Esophagus muscularis mucosa (tissue), 4 donors: ENCODE measurements at regions of chr10 and their contacts with region 1.

Region 1: DNA sequence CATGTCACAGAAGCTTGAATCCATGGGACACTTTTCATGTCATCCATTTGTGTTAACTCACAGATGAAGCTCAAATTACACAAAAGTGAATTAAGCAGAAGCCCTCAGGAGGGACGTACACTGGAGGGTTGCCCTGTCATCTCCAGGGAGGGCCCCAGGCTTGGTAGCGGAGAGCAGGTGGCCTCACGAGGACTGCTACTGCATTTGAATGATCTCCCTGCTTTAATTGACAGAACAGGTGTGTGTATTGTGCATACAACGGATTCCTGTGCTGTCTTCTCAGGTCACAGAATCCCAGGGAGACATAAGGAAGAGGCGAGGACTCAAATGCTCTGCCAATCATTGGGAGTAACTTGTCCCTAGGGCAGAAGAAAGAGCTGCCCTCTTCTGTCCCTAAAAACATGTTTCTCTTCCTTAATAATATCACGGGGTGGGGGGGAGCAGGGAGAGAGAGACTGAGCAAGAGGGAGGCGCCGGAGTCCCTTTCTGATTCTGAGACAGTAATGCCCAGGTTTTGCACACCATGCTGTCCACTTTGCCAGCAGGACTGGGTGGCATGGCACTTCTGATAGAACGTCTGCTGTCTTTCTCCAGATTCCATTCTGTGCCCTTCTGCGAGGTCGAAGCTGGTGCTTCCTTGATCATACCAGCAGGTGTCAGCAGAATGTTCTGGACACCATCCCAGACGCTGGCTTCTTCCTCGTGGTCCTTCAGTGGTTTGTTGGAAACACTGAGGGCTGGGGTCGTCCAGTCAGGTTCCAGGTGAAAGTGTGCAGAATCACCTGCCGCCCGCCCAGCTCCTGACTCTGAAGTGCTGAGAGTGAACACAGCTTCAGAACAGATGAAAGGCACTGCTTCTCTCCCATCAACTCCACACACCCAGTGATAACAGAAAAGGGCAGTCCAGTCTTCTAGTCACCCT is 26.2 kb upstream of the RASGEF1A start:
- DNase-seq: no peak
- H3K4me3 ChIP-seq: no peak overlapping the region
- H3K27ac ChIP-seq: no peak overlapping the region
- H3K4me1 ChIP-seq: peaks cover 0 to 9% (median 8%) of the 10 kb centered on the region in 4 donors
- H3K27me3 ChIP-seq: peaks cover 0 to 42% (median 3%) of the 10 kb centered on the region in 4 donors
- CTCF ChIP-seq: peak; percentile 72 to 79 (median 77)
- EP300 ChIP-seq: no peak
- POLR2A ChIP-seq: no peak

Region 2: DNA sequence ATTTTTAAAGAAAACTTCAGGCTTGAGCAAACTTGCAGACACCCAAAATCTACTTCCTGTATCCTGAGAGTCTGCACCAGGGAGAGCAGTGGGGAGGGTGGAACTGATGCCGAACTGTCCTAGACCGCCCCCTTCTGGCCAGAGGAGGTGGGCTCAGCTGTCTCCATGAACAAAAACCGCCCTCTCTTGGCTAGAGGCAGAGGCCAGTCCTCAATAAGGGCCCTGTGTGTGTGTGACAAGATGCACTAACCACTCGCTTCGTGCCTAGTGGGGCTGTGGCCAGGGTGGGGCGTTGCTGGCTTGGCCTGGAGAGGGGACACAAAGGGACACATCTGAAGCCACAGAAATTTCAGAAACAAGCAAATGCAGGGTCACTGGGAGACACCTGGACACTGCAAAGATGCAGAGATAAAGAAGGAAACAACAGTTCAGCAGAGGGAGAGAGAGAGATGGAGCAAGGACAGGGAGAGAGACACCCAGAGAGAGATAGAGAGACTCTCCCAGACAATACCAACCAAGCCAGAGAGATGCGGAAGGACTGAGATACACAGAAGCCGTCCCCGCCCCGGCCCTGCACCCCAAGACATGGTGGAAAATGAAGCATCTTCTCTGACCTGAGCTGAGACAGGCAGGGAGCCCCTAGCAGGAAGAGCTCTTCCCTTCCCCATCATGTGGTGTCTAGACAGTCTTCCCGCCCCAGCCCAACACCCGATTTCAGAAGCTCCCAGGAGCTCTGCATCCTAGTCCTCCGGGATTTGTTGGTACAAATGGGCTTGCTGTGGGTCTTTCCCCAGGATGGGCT is 55.7 kb after region 1 on chr10:
- intact Hi-C with region 1: loop called (anchors 2 kb)
- DNase-seq: peak; percentile 95
- H3K4me3 ChIP-seq: no peak overlapping the region
- H3K27ac ChIP-seq: no peak overlapping the region
- H3K4me1 ChIP-seq: peaks cover 0 to 7% (median 3%) of the 10 kb centered on the region in 4 donors
- H3K27me3 ChIP-seq: peaks cover 0 to 21% (median 7%) of the 10 kb centered on the region in 4 donors
- CTCF ChIP-seq: peak; percentile 81 to 90 (median 81)
- EP300 ChIP-seq: no peak
- POLR2A ChIP-seq: no peak

Region 3: DNA sequence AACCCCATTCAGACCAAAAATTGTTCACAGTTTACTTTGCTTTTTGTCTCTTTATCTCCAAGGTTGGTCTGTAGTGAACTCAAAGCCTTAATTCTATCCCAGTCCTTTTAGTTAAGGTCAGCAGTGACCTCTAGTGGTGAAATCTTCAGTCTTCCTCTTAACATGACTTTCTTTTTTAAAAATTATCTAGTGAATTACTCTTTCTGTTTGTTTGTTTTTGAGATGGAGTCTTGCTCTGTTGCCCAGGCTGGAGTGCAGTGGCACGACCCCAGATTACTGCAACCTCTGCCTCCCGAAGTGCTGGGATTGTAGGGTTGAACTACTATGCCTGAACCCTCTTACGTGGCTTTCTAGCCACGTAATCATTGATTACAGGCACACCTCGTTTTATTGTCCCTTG is 168.9 kb after region 1 on chr10:
- intact Hi-C with region 1: loop called (anchors 2 kb)
- DNase-seq: no peak
- H3K4me3 ChIP-seq: peak overlapping the region in 2 of 4 donors; percentile 24 to 44
- H3K27ac ChIP-seq: no peak overlapping the region
- H3K4me1 ChIP-seq: peaks cover 0 to 9% (median 3%) of the 10 kb centered on the region in 4 donors
- H3K27me3 ChIP-seq: no peaks in the 10 kb centered on the region
- CTCF ChIP-seq: peak; percentile 63 to 70 (median 69)
- EP300 ChIP-seq: no peak
- POLR2A ChIP-seq: no peak